CD8-positive, alpha-beta T cell (primary cell): ENCODE measurements at regions of chr7 and their contacts with region 1.

Region 1: GRCh38 chr7:56079450-56080185 is 13.1 kb downstream of the PHKG1 start:
- DNase-seq: no peak
- ATAC-seq: no peak
- H3K4me3 ChIP-seq: no peak overlapping the region
- H3K4me3 Mint-ChIP-seq: no peak overlapping the region
- H3K27ac ChIP-seq: no peak overlapping the region
- H3K27ac Mint-ChIP-seq: no peak overlapping the region
- H3K4me1 ChIP-seq: no peaks in the 10 kb centered on the region
- H3K4me1 Mint-ChIP-seq: no peaks in the 10 kb centered on the region
- H3K27me3 ChIP-seq: no peaks in the 10 kb centered on the region
- H3K27me3 Mint-ChIP-seq: no peaks in the 10 kb centered on the region
- CTCF ChIP-seq: no peak

Region 2: GRCh38 chr7:55774326-55775064 is 305.1 kb before region 1 on chr7:
- CTCF ChIA-PET with region 1: no interaction called
- POLR2A ChIA-PET with region 1: no interaction called
- intact Hi-C with region 1: loop called in 1 of 2 experiments (anchors 10 kb)
- DNase-seq: no peak
- ATAC-seq: no peak
- H3K4me3 ChIP-seq: no peak overlapping the region
- H3K4me3 Mint-ChIP-seq: no peak overlapping the region
- H3K27ac ChIP-seq: no peak overlapping the region
- H3K27ac Mint-ChIP-seq: no peak overlapping the region
- H3K4me1 ChIP-seq: no peaks in the 10 kb centered on the region
- H3K4me1 Mint-ChIP-seq: no peaks in the 10 kb centered on the region
- H3K27me3 ChIP-seq: no peaks in the 10 kb centered on the region
- H3K27me3 Mint-ChIP-seq: no peaks in the 10 kb centered on the region
- CTCF ChIP-seq: no peak

Region 3: DNA sequence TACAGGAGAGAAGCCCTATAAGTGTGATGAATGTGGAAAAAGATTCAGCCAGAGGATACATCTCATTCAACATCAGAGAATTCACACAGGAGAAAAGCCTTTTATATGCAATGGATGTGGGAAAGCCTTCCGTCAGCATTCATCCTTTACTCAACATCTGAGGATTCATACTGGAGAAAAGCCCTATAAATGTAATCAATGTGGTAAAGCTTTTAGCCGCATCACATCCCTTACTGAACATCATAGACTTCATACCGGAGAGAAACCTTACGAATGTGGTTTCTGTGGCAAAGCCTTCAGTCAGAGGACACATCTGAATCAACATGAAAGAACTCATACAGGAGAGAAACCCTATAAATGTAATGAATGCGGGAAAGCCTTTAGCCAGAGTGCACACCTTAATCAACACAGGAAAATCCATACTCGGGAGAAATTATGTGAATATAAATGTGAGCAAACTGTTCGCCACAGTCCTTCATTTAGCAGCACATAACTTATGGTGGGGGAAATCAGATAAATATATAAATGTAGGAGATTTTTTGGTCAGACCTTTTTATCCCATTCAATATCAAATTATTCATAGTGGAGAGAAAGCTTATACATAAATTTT is 140.0 kb before region 1 on chr7:
- CTCF ChIA-PET with region 1: no interaction called
- POLR2A ChIA-PET with region 1: no interaction called
- intact Hi-C with region 1: no loop called
- DNase-seq: no peak
- ATAC-seq: no peak
- H3K4me3 ChIP-seq: no peak overlapping the region
- H3K4me3 Mint-ChIP-seq: no peak overlapping the region
- H3K27ac ChIP-seq: no peak overlapping the region
- H3K27ac Mint-ChIP-seq: no peak overlapping the region
- H3K4me1 ChIP-seq: no peaks in the 10 kb centered on the region
- H3K4me1 Mint-ChIP-seq: no peaks in the 10 kb centered on the region
- H3K27me3 ChIP-seq: no peaks in the 10 kb centered on the region
- H3K27me3 Mint-ChIP-seq: no peaks in the 10 kb centered on the region
- CTCF ChIP-seq: no peak